OCI-LY7 (cell line): ENCODE measurements at regions of chr5 and their contacts with region 1.

Region 1: DNA sequence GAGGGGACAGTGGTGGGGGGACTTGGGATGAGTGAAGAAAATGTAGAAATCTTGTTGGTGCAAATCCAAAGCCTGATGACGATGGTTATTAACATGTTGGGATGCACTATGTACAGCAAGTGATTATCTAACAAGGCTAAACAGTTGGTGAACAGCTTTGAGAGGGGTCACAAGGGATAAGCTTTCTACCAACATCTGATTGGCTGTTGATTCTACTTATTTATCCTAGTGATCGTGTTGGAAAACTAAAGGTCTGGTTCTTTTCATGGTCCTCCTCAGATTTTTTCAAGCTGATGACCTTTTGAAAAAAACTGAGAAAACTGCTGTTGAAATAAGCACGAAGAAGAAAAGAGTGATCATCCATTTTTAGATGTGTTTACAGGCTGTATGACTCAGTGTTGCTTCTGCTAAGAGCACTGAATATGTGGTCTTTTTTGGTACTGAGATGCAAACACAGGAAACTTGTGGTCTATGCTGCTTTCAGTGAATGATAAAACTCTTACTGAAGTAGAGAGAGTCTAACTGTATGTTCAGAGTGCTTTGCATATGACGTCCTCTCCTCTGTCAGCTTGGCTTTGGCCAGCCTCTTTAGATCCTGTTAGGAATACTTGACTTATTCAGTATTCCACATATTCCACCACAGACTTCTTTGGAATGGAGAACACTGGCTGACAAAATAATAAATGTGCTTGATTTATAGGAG is 174.8 kb downstream of the SLF1 start:
- DNase-seq: peak; percentile 83
- H3K4me3 ChIP-seq: peak overlapping the region; percentile 58
- H3K27ac ChIP-seq: peak overlapping the region; percentile 84
- H3K4me1 ChIP-seq: peaks cover 43% of the 10 kb centered on the region
- CTCF ChIP-seq: no peak

Region 2: GRCh38 chr5:94618493-94619328 is 174.6 kb before region 1 on chr5 and contains the starts of genes KIAA0825 and SLF1:
- CTCF ChIA-PET with region 1: no interaction called
- POLR2A ChIA-PET with region 1: interaction called, 3 read pairs
- intact Hi-C with region 1: loop called (anchors 5 kb)
- DNase-seq: peak; percentile 89
- H3K4me3 ChIP-seq: peak within 1 kb of the TSS; percentile 91
- H3K27ac ChIP-seq: peak within 1 kb of the TSS; percentile 62
- H3K4me1 ChIP-seq: peaks cover 51% of the 10 kb centered on the region
- CTCF ChIP-seq: no peak
- total RNA-seq, gene KIAA0825: 0.28 and 0.32 TPM in 2 replicates
- total RNA-seq, gene SLF1: 20.9 and 51.3 TPM in 2 replicates

Region 3: GRCh38 chr5:94745786-94746730 is 47.2 kb before region 1 on chr5:
- CTCF ChIA-PET with region 1: no interaction called
- POLR2A ChIA-PET with region 1: no interaction called
- intact Hi-C with region 1: loop called (anchors 5 kb)
- DNase-seq: no peak
- H3K4me3 ChIP-seq: peak overlapping the region; percentile 23
- H3K27ac ChIP-seq: peak overlapping the region; percentile 25
- H3K4me1 ChIP-seq: peaks cover 46% of the 10 kb centered on the region
- CTCF ChIP-seq: no peak

Region 4: DNA sequence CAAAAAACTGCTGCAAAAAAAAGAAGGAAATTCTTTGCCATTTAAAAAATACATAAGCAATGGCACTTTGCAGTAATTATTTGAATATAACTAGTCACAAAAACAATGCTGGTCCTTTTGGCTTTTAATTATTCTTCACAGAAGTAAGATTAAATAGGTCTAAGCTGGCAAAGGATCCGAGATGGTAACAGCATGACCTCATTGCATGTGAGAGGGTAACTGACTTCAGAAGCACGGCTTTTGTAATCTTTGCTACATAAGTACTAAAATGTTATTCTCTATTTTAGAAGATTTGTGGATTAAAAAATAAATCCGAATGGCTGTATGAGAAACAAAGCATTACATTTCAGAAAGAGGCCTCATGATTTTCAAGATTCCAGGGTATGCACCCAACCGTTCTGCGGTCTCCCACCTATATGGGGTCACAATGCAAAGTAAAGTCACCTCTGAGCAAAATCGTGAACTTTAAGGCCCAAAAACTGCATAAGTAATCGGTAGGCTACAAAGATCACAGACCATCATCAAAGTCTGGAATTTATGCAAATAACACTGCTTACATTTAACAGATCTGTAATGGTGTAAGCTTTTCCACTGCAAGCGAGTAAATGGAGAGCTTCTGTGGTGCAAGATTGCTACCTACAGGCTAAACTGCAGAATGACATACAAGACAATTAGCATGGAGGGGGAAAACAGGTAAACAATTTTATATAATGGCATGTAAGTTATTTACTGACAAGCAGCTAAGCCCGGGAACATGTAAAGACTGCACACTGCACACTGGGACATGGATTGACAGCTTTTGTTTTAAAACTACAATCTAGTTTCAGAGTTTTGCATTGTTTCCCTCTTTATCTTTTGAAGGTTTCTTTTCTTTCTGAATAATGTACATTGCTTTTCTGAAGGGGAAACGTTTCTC is 56.8 kb after region 1 on chr5:
- CTCF ChIA-PET with region 1: interaction called, 3 read pairs
- POLR2A ChIA-PET with region 1: no interaction called
- intact Hi-C with region 1: loop called (anchors 5 kb)
- DNase-seq: peak; percentile 79
- H3K4me3 ChIP-seq: no peak overlapping the region
- H3K27ac ChIP-seq: no peak overlapping the region
- H3K4me1 ChIP-seq: peaks cover 31% of the 10 kb centered on the region
- CTCF ChIP-seq: peak; percentile 97